ENCODE measurements at regions of chr11 and their contacts with region 1.

Region 1: DNA sequence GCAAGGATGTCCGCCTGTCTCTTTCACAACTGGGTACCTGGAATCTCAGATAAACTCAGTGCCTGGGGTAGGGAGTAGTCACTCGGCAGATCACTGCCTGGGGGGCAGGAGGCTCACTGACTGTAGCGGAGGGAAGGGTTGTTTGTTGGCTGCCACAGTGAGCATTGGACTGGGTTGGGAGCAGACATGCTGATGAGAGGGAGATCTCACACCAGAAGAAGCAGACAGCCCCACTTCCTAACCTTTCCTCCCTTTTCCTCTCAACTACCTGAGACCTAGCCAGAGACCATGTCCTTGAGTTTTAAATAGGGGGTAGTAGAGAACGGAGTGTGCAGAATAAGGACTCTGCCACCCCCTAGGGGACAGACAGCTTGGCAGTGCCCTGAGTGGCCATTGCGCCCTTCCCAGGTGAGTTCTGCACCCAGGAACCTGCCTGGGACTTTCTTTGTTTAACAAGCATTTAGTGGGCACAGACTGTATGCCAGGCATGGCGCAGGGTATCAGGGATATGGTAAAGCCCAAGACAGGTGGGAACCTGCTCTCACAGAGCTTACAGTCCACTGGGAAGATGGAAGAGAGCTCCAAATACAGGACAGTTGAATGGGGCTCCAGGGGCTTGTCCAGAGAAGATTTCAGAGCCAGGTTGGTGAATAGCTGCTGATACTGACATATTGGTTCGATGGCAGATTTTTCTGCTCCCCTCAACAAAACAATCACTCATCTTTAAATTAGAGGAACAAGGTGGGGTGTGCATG is 115.7 kb upstream of the NNMT start:
- DNase-seq: peak; percentile 59
- H3K4me3 ChIP-seq: no peak overlapping the region
- H3K27ac ChIP-seq: peak overlapping the region; percentile 90
- H3K4me1 ChIP-seq: peaks cover 31% of the 10 kb centered on the region
- H3K27me3 ChIP-seq: no peaks in the 10 kb centered on the region
- CTCF ChIP-seq: peak; percentile 52 to 61
- POLR2A ChIP-seq: no peak

Region 2: GRCh38 chr11:114026355-114026754 is 154.1 kb before region 1 on chr11:
- CTCF ChIA-PET with region 1: interaction called, 15 read pairs
- POLR2A ChIA-PET with region 1: no interaction called
- dilution Hi-C with region 1: no loop called
- intact Hi-C with region 1: no loop called
- DNase-seq: no peak
- H3K4me3 ChIP-seq: no peak overlapping the region
- H3K27ac ChIP-seq: no peak overlapping the region
- H3K4me1 ChIP-seq: no peaks in the 10 kb centered on the region
- H3K27me3 ChIP-seq: peaks cover 17 to 22% of the 10 kb centered on the region in 2 experiments
- CTCF ChIP-seq: peak in 1 of 2 donors; percentile 8
- POLR2A ChIP-seq: no peak

Region 3: DNA sequence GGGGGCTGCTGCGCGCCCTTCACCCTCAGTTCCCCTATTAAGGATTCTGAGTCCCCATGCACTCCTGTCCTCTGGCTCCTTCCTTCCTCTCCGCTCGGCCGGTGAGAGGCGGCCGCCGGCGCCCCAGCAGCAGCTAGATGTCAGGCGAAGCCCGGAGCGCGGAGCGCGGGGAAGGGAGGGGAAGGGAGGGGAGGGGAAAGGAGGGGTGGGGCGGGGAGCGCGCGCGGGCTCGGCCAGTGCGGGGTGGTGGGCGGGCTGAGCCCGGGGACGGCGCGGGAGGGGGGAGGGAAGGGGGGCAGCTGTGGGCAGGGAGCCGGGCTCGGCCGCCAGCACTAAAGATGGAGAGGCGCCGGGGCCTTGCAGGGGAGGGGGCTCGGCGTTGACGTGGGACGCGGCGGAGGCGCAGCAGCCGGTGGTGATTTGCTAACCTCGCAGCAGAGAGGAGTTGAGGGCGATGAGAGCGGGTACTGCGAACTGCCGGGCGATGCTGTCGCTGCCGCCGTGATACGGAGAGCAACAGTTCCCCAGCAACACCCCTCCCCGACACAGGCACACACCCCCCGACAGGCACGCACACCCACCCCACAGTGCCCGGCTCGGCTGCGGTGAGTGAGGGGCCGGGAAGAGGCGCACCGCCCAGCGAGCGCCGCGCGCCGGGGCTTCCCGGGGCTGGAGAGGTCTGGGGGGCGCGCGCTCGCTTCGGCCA is 121.0 kb before region 1 on chr11 and contains the start of gene ZBTB16:
- CTCF ChIA-PET with region 1: interaction called, 63 read pairs
- POLR2A ChIA-PET with region 1: interaction called, 3 read pairs
- dilution Hi-C with region 1: no loop called
- intact Hi-C with region 1: loop called (anchors 1 kb)
- DNase-seq: peak; percentile 83
- H3K4me3 ChIP-seq: peak within 1 kb of the TSS; percentile 86 to 90 (median 87)
- H3K27ac ChIP-seq: peak within 1 kb of the TSS; percentile 78
- H3K4me1 ChIP-seq: peaks cover 8% of the 10 kb centered on the region
- H3K27me3 ChIP-seq: peaks cover 0 to 2% of the 10 kb centered on the region in 2 experiments
- CTCF ChIP-seq: peak; percentile 4 to 29
- POLR2A ChIP-seq: no peak
- total RNA-seq, gene ZBTB16: 19.5 and 20.3 TPM in 2 replicates

Region 4: GRCh38 chr11:114135737-114136151 is 44.7 kb before region 1 on chr11:
- CTCF ChIA-PET with region 1: interaction called, 7 read pairs
- POLR2A ChIA-PET with region 1: no interaction called
- dilution Hi-C with region 1: no loop called
- intact Hi-C with region 1: loop called (anchors 1 kb)
- DNase-seq: no peak
- H3K4me3 ChIP-seq: no peak overlapping the region
- H3K27ac ChIP-seq: no peak overlapping the region
- H3K4me1 ChIP-seq: peaks cover 42% of the 10 kb centered on the region
- H3K27me3 ChIP-seq: no peaks in the 10 kb centered on the region
- CTCF ChIP-seq: no peak
- POLR2A ChIP-seq: no peak

Region 5: GRCh38 chr11:114192841-114193389 is 12.4 kb after region 1 on chr11:
- CTCF ChIA-PET with region 1: interaction called, 22 read pairs
- POLR2A ChIA-PET with region 1: interaction called, 6 read pairs
- dilution Hi-C with region 1: no loop called
- intact Hi-C with region 1: loop called (anchors 1 kb)
- DNase-seq: no peak
- H3K4me3 ChIP-seq: no peak overlapping the region
- H3K27ac ChIP-seq: no peak overlapping the region
- H3K4me1 ChIP-seq: peaks cover 9% of the 10 kb centered on the region
- H3K27me3 ChIP-seq: no peaks in the 10 kb centered on the region
- CTCF ChIP-seq: no peak
- POLR2A ChIP-seq: no peak

Region 6: DNA sequence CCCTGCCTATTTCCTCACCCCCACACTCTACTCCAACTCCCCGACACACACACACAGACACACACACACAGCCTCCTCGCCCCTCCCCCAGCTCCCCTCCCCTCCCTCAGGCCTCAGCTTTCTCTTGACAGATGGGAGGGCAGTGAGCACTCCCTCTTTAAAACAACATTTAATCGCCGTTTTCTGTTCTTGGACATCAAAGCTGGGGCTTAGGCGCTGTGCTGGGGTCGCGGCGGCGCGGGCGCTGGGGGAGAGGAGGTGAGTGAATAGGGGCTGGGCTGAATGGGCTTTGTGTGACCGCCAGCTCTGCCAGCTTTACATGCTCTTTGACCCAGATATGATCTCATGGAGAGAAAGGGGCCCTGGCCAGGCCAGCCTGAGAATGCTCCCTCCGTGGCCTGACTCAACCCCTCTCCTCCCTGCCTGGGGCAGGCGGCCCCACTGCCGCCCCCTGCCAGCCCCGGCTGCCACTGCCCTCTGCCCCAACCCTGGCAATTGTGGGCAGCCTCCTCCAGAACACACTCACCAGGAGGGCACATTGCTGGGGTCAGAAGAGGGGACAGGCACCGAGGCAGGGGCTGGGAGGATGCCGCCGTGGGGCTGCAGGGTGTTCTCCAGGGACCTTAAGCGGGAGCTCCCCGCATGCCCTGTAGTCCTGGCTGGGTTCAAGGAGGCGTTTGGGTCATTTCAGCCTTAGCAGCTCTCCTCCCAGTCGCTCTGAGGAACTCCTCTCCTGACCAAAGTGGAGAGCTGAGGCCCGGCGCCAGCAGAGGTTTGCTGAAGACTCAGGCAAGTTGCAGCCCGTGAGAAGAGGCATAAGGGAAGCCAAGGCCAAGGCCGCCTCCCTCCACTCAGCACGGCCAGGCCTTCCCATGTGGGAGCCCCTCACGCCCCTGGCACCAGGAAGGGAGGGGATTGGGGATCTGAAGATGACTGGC is 77.4 kb after region 1 on chr11:
- CTCF ChIA-PET with region 1: interaction called, 61 read pairs
- POLR2A ChIA-PET with region 1: no interaction called
- dilution Hi-C with region 1: no loop called
- intact Hi-C with region 1: loop called (anchors 1 kb)
- DNase-seq: peak; percentile 42
- H3K4me3 ChIP-seq: no peak overlapping the region
- H3K27ac ChIP-seq: no peak overlapping the region
- H3K4me1 ChIP-seq: no peaks in the 10 kb centered on the region
- H3K27me3 ChIP-seq: no peaks in the 10 kb centered on the region
- CTCF ChIP-seq: peak; percentile 36 to 56
- POLR2A ChIP-seq: no peak

Region 7: GRCh38 chr11:114604179-114604813 is 423.8 kb after region 1 on chr11:
- CTCF ChIA-PET with region 1: no interaction called
- POLR2A ChIA-PET with region 1: no interaction called
- dilution Hi-C with region 1: no loop called
- intact Hi-C with region 1: no loop called
- DNase-seq: no peak
- H3K4me3 ChIP-seq: no peak overlapping the region
- H3K27ac ChIP-seq: no peak overlapping the region
- H3K4me1 ChIP-seq: no peaks in the 10 kb centered on the region
- H3K27me3 ChIP-seq: no peaks in the 10 kb centered on the region
- CTCF ChIP-seq: no peak
- POLR2A ChIP-seq: no peak

Measured in endothelial cell of umbilical vein (primary cell).